Heart left ventricle (tissue), 16 donors: ENCODE measurements at regions of chr2 and their contacts with region 1.

Region 1: GRCh38 chr2:182616471-182617393 is 99.3 kb upstream of the DNAJC10 start:
- DNase-seq: no peak
- ATAC-seq: peak in 3 of 4 donors; percentile 18 to 30 (median 29)
- H3K4me3 ChIP-seq: no peak overlapping the region
- H3K27ac ChIP-seq: peak overlapping the region in 1 of 12 donors; percentile 42
- H3K4me1 ChIP-seq: peaks cover 0 to 20% (median 2%) of the 10 kb centered on the region in 12 donors
- H3K27me3 ChIP-seq: no peaks in the 10 kb centered on the region
- CTCF ChIP-seq: no peak
- POLR2A ChIP-seq: no peak

Region 2: GRCh38 chr2:182447863-182448262 is 168.9 kb before region 1 on chr2:
- intact Hi-C with region 1: loop called in 1 of 10 experiments (anchors 10 kb)
- DNase-seq: no peak
- ATAC-seq: peak in 2 of 4 donors; percentile 36 to 58
- H3K4me3 ChIP-seq: no peak overlapping the region
- H3K27ac ChIP-seq: no peak overlapping the region
- H3K4me1 ChIP-seq: peaks cover 0 to 37% (median 10%) of the 10 kb centered on the region in 12 donors
- H3K27me3 ChIP-seq: no peaks in the 10 kb centered on the region
- CTCF ChIP-seq: no peak
- POLR2A ChIP-seq: no peak